ENCODE measurements at regions of chr4 and their contacts with region 1.

Region 1: DNA sequence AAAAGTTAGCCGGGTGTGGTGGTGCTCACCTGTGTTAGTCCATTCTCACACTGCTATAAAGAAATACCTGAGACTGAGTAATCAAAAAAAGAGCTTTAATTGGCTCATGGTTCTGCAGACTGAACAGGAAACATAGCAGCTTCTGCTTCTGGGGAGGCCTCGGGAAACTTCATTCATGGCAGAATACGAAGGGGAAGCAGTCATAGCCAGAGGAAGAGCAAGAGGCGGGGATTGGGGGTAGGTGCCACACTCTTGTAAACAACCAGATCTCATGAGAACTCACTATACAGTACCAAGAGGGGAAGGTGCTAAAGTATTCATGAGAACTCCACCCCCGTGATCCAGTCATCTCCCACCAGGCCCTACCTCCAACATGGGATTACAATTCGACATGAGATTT is 64.1 kb downstream of the BEND4 start:
- DNase-seq: no peak
- ATAC-seq: no peak
- H3K4me3 ChIP-seq: no peak overlapping the region
- H3K27ac ChIP-seq: no peak overlapping the region
- H3K4me1 ChIP-seq: no peaks in the 10 kb centered on the region
- H3K27me3 ChIP-seq: no peaks in the 10 kb centered on the region
- CTCF ChIP-seq: no peak

Region 2: DNA sequence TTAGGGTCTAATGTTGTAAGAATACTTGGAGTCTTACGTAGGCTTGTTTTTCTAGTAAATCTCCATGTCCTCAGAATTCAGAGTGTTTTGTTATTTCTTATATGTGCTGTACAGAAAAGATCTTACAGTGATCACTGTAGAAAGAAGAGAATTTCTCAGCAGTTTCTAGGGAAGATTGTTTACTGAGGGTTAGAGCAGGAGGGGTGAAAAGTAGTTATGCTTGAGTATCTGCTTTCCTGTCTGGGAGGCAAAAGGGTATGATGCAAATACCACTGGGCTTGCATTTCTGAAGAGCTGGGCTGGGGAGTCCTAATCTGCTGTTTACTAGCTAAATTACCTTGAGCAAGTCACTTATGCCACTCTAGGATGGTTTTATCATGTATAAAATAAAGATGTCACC is 14.1 kb before region 1 on chr4:
- CTCF ChIA-PET with region 1: interaction called, 13 read pairs
- POLR2A ChIA-PET with region 1: no interaction called
- intact Hi-C with region 1: no loop called
- DNase-seq: no peak
- ATAC-seq: no peak
- H3K4me3 ChIP-seq: no peak overlapping the region
- H3K27ac ChIP-seq: no peak overlapping the region
- H3K4me1 ChIP-seq: no peaks in the 10 kb centered on the region
- H3K27me3 ChIP-seq: no peaks in the 10 kb centered on the region
- CTCF ChIP-seq: no peak

Region 3: GRCh38 chr4:42396752-42397634 is 308.6 kb after region 1 on chr4 and contains the start of gene SHISA3:
- CTCF ChIA-PET with region 1: no interaction called
- POLR2A ChIA-PET with region 1: no interaction called
- intact Hi-C with region 1: no loop called
- DNase-seq: peak; percentile 53
- ATAC-seq: peak; percentile 68
- H3K4me3 ChIP-seq: peak within 1 kb of the TSS; percentile 90
- H3K27ac ChIP-seq: no peak within 1 kb of the TSS
- H3K4me1 ChIP-seq: peaks cover 11% of the 10 kb centered on the region; the same call in 1 of the 2 replicates
- H3K27me3 ChIP-seq: no peaks in the 10 kb centered on the region
- CTCF ChIP-seq: no peak
- total RNA-seq, gene SHISA3: 29.5 and 33.5 TPM in 2 replicates

Measured in PC-3 (cell line).